ENCODE measurements at regions of chr11 and their contacts with region 1.

Region 1: DNA sequence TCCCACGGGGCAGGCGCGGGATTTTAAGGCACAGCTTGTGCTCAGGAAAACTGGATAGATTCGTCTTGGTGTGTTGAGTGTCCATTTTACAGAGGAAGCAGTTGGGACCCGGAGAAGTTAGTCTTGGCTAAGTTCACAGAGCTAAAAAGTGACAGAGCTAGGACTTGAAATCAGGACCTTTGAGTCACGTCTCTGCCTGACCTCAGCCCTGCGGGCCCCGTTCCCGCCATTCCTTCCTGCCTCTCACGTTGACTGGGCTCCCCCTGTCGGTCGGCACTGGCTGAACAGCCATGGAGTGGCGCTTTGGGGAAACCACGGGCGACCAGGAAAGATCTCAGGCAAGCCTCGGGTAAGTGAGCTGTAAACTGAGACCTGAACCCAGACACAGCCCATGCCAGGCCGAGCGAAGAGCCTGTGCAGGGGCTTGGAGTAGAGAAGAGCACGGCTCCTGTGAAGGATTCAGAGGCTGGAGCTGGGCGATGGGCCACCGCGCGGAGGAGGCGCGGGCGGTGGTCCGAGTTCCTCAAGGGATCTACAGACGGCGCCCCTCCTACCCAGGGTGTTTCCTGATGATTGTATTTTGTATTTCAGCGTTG is 54.1 kb downstream of the WNT11 start:
- DNase-seq: peak; percentile 90
- ATAC-seq: peak; percentile 91
- H3K4me3 Mint-ChIP-seq: peak overlapping the region; percentile 70
- H3K27ac Mint-ChIP-seq: no peak overlapping the region
- H3K4me1 Mint-ChIP-seq: peaks cover 13% of the 10 kb centered on the region
- H3K27me3 Mint-ChIP-seq: peaks cover 22% of the 10 kb centered on the region
- CTCF ChIP-seq: peak; percentile 92

Region 2: DNA sequence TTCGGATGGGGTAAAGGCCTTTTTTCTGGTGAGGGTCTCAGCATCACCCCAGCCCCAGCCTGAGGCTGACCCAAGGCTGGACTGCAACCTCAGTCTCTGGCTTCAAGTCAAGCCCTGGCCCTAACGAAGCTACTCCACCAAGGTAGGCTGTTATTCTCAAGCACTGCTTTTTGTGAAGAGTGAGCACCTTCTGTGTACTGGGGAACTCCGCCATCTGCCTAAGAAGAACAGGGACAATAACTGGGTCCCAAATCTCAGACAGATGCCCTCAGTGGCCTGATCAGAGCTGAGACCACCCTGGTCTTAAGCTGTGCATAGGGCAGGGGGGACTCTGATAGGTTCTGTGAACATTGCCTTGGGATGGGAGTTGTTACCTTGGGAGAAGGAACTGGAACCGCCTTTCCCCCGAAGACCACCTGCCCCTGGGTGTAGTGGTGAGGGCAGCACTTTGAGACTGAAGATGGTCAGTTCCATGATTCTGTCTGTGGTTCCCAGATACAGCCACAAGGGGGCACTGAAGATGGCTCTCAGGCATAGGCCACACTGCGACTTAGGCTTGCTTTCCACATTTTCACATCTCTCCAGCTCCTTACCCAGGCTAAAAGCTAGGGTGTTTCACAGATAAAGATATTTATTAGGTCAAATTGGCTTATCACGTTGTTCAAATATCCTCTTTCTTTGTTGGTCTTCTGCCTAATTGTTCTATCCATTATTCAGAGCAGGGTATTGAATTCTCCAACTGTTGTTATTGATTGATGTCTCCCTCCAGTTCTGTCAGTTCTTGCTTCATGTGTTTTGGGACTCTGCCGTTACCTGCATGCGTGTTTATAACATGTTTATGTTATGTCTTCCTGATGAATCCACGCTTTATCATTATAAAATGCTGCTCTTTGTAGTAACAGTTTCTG is 349.0 kb before region 1 on chr11:
- CTCF ChIA-PET with region 1: interaction called, 19 read pairs
- POLR2A ChIA-PET with region 1: no interaction called
- DNase-seq: peak; percentile 84
- ATAC-seq: peak; percentile 95
- H3K4me3 Mint-ChIP-seq: no peak overlapping the region
- H3K27ac Mint-ChIP-seq: no peak overlapping the region
- H3K4me1 Mint-ChIP-seq: peaks cover 4% of the 10 kb centered on the region; the same call in 1 of the 2 replicates
- H3K27me3 Mint-ChIP-seq: peaks cover 5% of the 10 kb centered on the region; the same call in 1 of the 2 replicates
- CTCF ChIP-seq: peak; percentile 82

Region 3: GRCh38 chr11:75938543-75938942 is 213.6 kb before region 1 on chr11:
- CTCF ChIA-PET with region 1: no interaction called
- POLR2A ChIA-PET with region 1: no interaction called
- DNase-seq: no peak
- ATAC-seq: no peak
- H3K4me3 Mint-ChIP-seq: no peak overlapping the region
- H3K27ac Mint-ChIP-seq: no peak overlapping the region
- H3K4me1 Mint-ChIP-seq: peaks cover 12% of the 10 kb centered on the region
- H3K27me3 Mint-ChIP-seq: no peaks in the 10 kb centered on the region
- CTCF ChIP-seq: no peak

Region 4: GRCh38 chr11:76107971-76108370 is 44.2 kb before region 1 on chr11:
- CTCF ChIA-PET with region 1: interaction called, 11 read pairs
- POLR2A ChIA-PET with region 1: no interaction called
- DNase-seq: no peak
- ATAC-seq: no peak
- H3K4me3 Mint-ChIP-seq: no peak overlapping the region
- H3K27ac Mint-ChIP-seq: no peak overlapping the region
- H3K4me1 Mint-ChIP-seq: no peaks in the 10 kb centered on the region
- H3K27me3 Mint-ChIP-seq: no peaks in the 10 kb centered on the region
- CTCF ChIP-seq: no peak

Region 5: DNA sequence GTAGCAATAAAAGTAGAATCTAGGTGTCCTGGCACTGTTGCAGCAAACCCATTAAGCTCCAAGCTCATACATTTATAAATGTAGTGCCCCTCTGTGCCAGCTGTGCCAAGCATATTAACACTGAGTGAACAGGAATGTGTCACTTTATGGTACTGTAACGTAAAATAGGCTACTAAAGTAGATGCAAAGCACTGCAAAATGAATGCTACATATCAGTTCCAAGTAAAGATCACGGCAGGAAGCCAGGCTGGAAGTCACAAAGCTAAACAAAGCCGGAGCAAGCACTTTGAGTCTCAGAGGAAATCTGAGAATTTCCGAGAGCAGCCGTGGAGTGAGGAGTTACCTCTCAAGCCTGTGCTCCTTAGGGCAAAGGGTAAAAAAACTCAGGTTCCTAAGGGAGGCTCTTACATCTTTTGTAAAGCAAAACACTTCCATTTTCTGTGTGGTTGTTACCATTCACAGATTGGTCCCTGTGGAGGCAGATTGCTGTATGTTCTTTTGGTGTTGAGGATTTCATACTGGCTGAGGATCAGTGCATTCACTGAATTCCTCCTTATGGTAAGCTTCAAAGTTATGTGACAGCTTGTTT is 31.6 kb before region 1 on chr11:
- CTCF ChIA-PET with region 1: interaction called, 31 read pairs
- POLR2A ChIA-PET with region 1: no interaction called
- DNase-seq: no peak
- ATAC-seq: peak; percentile 87
- H3K4me3 Mint-ChIP-seq: no peak overlapping the region
- H3K27ac Mint-ChIP-seq: no peak overlapping the region; the same call in 1 of the 2 replicates
- H3K4me1 Mint-ChIP-seq: peaks cover 7% of the 10 kb centered on the region
- H3K27me3 Mint-ChIP-seq: no peaks in the 10 kb centered on the region
- CTCF ChIP-seq: no peak

Region 6: DNA sequence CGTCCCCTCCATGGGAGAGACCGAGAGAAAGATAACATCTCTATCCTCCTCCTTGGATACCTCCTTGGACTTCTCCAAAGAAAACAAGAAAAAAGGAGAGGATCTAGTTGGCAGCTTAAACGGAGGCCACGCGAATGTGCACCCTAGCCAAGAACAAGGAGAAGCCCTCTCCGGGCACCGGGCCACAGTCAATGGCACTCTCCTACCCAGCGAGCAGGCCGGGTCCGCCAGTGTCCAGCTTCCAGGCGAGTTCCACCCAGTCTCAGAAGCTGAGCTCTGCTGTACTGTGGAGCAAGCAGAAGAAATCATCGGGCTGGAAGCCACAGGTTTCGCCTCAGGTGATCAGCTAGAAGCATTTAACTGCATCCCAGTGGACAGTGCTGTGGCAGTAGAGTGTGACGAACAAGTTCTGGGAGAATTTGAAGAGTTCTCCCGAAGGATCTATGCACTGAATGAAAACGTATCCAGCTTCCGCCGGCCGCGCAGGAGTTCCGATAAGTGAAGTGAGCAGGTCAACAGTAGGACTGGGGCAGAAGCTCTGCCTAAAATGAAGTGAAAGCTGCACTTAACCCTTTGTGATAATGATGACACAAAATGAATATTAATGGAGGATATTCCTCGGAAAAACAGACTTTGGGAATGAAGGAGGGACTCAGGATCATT is 11.1 kb before region 1 on chr11:
- CTCF ChIA-PET with region 1: interaction called, 25 read pairs
- POLR2A ChIA-PET with region 1: no interaction called
- DNase-seq: no peak
- ATAC-seq: no peak
- H3K4me3 Mint-ChIP-seq: no peak overlapping the region
- H3K27ac Mint-ChIP-seq: peak overlapping the region; percentile 7; the same call in 1 of the 2 replicates
- H3K4me1 Mint-ChIP-seq: no peaks in the 10 kb centered on the region
- H3K27me3 Mint-ChIP-seq: no peaks in the 10 kb centered on the region
- CTCF ChIP-seq: no peak

Region 7: DNA sequence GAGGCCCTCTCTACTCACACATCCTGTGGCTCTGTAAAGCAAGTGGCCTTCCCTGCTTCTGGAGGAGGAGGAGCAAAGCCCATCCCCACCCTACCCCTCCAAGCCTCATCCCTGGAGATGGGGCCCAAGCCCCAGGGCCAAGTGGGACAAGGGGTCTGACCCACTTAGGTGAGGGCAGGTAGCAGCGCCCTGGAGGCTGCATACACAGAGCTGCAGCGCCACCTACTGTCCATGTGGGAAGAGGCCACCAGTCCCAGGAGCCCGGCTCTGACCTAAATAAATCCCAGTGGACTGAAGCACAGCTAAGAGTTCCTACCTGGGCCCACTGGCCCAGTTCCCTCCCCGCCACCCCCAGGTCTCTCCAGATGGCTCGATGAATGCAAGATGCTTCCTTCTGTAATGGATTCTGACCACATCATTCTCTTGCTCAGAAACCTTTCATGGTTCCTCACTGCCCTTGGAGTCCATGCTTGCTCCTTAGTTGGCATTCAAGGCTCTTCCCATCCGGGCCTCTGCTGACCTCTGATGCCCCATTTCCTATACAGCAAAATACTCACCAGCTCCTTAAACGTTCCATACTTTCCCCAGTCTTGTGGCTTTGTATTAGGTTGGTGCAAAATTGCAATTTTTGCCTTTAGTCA is 166.7 kb after region 1 on chr11:
- CTCF ChIA-PET with region 1: interaction called, 13 read pairs
- POLR2A ChIA-PET with region 1: no interaction called
- DNase-seq: peak; percentile 94
- ATAC-seq: peak; percentile 88
- H3K4me3 Mint-ChIP-seq: no peak overlapping the region
- H3K27ac Mint-ChIP-seq: no peak overlapping the region
- H3K4me1 Mint-ChIP-seq: peaks cover 24% of the 10 kb centered on the region
- H3K27me3 Mint-ChIP-seq: peaks cover 41% of the 10 kb centered on the region
- CTCF ChIP-seq: peak; percentile 93

Measured in WTC11 (cell line).